BJ (cell line): ENCODE measurements at regions of chr9 and their contacts with region 1.

Region 1: GRCh38 chr9:124617471-124618141 is 110.4 kb upstream of the NR5A1 start:
- DNase-seq: no peak
- H3K4me3 ChIP-seq: no peak overlapping the region
- H3K27me3 ChIP-seq: no peaks in the 10 kb centered on the region
- CTCF ChIP-seq: peak; percentile 90

Region 2: DNA sequence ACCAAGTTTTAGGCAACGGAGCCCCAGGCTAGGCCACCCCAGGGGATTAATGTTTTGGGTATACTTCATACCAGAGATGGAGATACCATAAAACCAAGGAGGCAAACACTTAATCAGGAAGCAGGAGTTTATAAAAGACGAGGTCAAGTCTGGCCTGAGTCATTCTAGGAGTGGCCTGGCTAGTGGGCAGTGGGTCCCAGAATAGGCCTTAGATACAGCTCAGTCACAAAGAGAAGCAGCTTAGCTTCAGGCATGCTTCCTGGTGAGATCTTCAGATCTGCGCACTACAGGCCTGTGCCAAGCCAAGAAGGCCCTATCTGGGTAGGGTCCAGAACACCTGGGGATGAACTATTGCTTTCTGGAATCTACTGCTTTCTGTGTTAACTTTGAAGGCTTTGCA is 89.8 kb before region 1 on chr9:
- CTCF ChIA-PET with region 1: no interaction called
- POLR2A ChIA-PET with region 1: no interaction called
- DNase-seq: peak; percentile 4
- H3K4me3 ChIP-seq: no peak overlapping the region
- H3K27me3 ChIP-seq: 0 out of 2 replicates have a peak, but pooled peaks cover under 1% of the 10 kb centered on the region
- CTCF ChIP-seq: no peak

Region 3: DNA sequence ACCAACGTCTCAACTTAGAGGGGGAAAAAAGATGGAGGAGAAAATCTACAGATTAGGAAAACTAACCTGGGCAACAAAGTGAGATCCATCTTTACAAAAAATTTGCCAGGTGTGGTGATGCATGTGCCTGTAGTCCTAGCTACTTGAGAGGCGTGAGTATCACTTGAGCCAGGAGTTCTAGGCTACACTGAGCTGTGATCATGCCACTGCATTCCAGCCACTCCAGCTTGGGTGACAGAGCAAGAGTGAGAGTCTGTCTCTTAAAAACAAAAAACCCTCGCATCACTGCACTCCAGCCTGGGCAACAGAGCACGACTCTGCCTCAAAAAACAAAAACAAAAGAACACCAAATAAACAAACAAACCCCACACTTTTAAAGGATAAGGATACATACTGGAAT is 12.3 kb before region 1 on chr9:
- CTCF ChIA-PET with region 1: interaction called, 10 read pairs
- POLR2A ChIA-PET with region 1: no interaction called
- DNase-seq: no peak
- H3K4me3 ChIP-seq: no peak overlapping the region
- H3K27me3 ChIP-seq: no peaks in the 10 kb centered on the region; the same call in 1 of the 2 replicates
- CTCF ChIP-seq: no peak

Region 4: DNA sequence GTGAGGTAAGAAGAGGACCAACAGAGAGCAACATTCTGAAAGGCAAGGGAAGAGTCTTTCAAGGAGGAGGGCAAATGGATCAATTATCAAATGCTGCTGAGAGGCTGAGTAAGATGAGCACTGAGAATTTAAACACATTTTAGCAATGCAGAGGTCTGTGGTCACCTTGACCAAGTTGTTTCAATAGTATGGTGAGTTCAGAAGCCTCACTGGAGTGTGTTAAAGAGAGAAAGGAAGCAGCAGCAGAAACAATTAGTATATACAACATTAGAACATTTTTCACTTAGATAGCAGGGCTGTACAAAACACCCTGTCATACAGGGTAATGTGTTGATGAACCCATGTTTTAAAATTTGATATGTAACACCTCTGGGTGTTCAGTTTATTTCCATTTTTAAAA is 22.0 kb after region 1 on chr9:
- CTCF ChIA-PET with region 1: no interaction called
- POLR2A ChIA-PET with region 1: no interaction called
- DNase-seq: no peak
- H3K4me3 ChIP-seq: no peak overlapping the region
- H3K27me3 ChIP-seq: no peaks in the 10 kb centered on the region
- CTCF ChIP-seq: no peak

Region 5: GRCh38 chr9:124658165-124659017 is 40.8 kb after region 1 on chr9:
- CTCF ChIA-PET with region 1: interaction called, 30 read pairs
- POLR2A ChIA-PET with region 1: no interaction called
- DNase-seq: peak; percentile 82
- H3K4me3 ChIP-seq: peak overlapping the region; percentile 50
- H3K27me3 ChIP-seq: no peaks in the 10 kb centered on the region
- CTCF ChIP-seq: no peak

Region 6: GRCh38 chr9:124721109-124721906 is 103.7 kb after region 1 on chr9:
- CTCF ChIA-PET with region 1: interaction called, 204 read pairs
- POLR2A ChIA-PET with region 1: no interaction called
- DNase-seq: peak; percentile 37
- H3K4me3 ChIP-seq: no peak overlapping the region
- H3K27me3 ChIP-seq: no peaks in the 10 kb centered on the region
- CTCF ChIP-seq: no peak

Region 7: GRCh38 chr9:124764774-124765438 is 147.3 kb after region 1 on chr9:
- CTCF ChIA-PET with region 1: interaction called, 26 read pairs
- POLR2A ChIA-PET with region 1: no interaction called
- DNase-seq: no peak
- H3K4me3 ChIP-seq: no peak overlapping the region
- H3K27me3 ChIP-seq: peaks cover 23% of the 10 kb centered on the region
- CTCF ChIP-seq: peak; percentile 42